T-cell (primary cell): ENCODE measurements at regions of chr22 and their contacts with region 1.

Region 1: DNA sequence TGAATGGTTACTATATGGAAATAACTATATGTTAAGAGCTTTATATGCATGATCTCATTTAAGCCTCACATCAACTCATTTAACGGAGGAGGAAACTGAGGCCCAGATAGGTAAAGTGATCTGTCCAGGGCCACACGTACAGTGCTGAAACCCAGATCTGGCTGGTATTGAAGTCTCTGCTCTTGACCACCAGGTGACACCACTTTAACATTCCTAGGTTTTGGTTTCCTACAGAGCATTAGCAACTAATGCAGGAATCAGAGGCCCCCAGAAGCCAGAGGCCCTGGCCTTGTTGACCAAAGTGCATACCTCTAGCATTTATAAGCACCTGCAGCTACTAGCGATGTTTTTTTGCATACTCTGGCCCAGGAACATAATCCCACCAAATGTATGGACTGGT is 12.9 kb upstream of the LIMK2 start:
- DNase-seq: peak in 1 of 35 experiments; percentile 18
- ATAC-seq: no peak
- H3K4me3 ChIP-seq: no peak overlapping the region
- H3K4me3 Mint-ChIP-seq: no peak overlapping the region
- H3K27ac ChIP-seq: no peak overlapping the region
- H3K27ac Mint-ChIP-seq: peak overlapping the region in 1 of 2 donors; percentile 7
- H3K4me1 ChIP-seq: no peaks in the 10 kb centered on the region
- H3K4me1 Mint-ChIP-seq: peaks cover 0 to 3% (median 0%) of the 10 kb centered on the region in 3 donors
- H3K27me3 ChIP-seq: no peaks in the 10 kb centered on the region
- H3K27me3 Mint-ChIP-seq: no peaks in the 10 kb centered on the region

Region 2: GRCh38 chr22:31218565-31219262 is 19.5 kb after region 1 on chr22:
- CTCF ChIA-PET with region 1: no interaction called
- POLR2A ChIA-PET with region 1: interaction called in 1 of 2 experiments, 12 read pairs
- DNase-seq: no peak
- ATAC-seq: no peak
- H3K4me3 ChIP-seq: no peak overlapping the region
- H3K4me3 Mint-ChIP-seq: no peak overlapping the region
- H3K27ac ChIP-seq: no peak overlapping the region
- H3K27ac Mint-ChIP-seq: peak overlapping the region; percentile 89 to 90
- H3K4me1 ChIP-seq: peaks cover 4 to 5% of the 10 kb centered on the region in 2 experiments
- H3K4me1 Mint-ChIP-seq: peaks cover 48 to 69% (median 59%) of the 10 kb centered on the region in 3 donors
- H3K27me3 ChIP-seq: no peaks in the 10 kb centered on the region
- H3K27me3 Mint-ChIP-seq: no peaks in the 10 kb centered on the region

Region 3: DNA sequence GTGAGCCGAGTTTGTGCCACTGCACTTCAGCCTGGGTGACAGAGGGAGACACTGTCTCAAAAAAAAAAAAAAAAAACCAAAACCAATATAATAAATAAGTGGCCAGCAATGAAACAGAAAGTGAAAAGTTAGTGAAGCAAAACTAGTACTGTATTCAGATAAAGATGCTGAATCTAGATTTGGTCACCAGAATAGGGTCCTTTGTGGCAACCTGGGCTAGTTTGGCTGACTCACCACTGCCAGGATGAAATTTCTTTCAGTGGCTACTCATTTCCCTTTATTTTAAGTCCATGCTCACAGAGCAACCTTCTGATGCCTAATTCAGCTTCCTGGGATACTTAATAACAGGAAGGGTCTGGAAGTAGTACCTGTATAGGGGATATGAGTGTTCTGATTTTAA is 38.9 kb after region 1 on chr22:
- CTCF ChIA-PET with region 1: no interaction called
- POLR2A ChIA-PET with region 1: no interaction called
- DNase-seq: no peak
- ATAC-seq: no peak
- H3K4me3 ChIP-seq: no peak overlapping the region
- H3K4me3 Mint-ChIP-seq: no peak overlapping the region
- H3K27ac ChIP-seq: no peak overlapping the region
- H3K27ac Mint-ChIP-seq: peak overlapping the region in 1 of 2 donors; percentile 13
- H3K4me1 ChIP-seq: peaks cover 0 to 5% of the 10 kb centered on the region in 2 experiments
- H3K4me1 Mint-ChIP-seq: peaks cover 18 to 35% (median 31%) of the 10 kb centered on the region in 3 donors
- H3K27me3 ChIP-seq: no peaks in the 10 kb centered on the region
- H3K27me3 Mint-ChIP-seq: no peaks in the 10 kb centered on the region